Calu3 (cell line): ENCODE measurements at regions of chrX and their contacts with region 1.

Region 1: GRCh38 chrX:121052111-121052510 is 4.7 kb downstream of the GLUD2 start:
- DNase-seq: no peak
- H3K4me3 Mint-ChIP-seq: no peak overlapping the region
- H3K27ac Mint-ChIP-seq: no peak overlapping the region
- H3K4me1 Mint-ChIP-seq: no peaks in the 10 kb centered on the region
- H3K27me3 Mint-ChIP-seq: no peaks in the 10 kb centered on the region
- CTCF ChIP-seq: no peak

Region 2: DNA sequence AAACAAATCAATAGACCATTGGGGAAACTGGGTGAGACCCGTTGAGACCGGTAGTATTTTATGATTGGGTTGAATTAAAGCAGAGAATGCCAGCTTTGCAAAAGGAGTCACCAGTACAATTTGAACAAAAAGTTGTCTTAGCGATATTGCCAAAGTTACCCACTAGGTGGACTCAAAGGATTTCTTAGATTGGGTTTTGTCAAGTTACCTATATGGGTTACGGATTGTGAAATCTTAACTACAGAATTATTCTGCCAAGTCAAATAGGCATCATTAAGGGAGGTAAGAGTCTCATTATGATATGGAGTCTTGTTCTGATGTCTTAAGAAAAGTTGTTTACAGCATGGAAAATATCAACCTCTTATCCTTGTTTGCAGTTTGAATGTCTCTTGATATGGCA is 51.5 kb before region 1 on chrX:
- CTCF ChIA-PET with region 1: no interaction called
- intact Hi-C with region 1: loop called (anchors 2 kb)
- DNase-seq: peak; percentile 20
- H3K4me3 Mint-ChIP-seq: no peak overlapping the region
- H3K27ac Mint-ChIP-seq: no peak overlapping the region
- H3K4me1 Mint-ChIP-seq: peaks cover 8% of the 10 kb centered on the region
- H3K27me3 Mint-ChIP-seq: no peaks in the 10 kb centered on the region
- CTCF ChIP-seq: no peak